ENCODE measurements at regions of chr1 and their contacts with region 1.

Region 1: DNA sequence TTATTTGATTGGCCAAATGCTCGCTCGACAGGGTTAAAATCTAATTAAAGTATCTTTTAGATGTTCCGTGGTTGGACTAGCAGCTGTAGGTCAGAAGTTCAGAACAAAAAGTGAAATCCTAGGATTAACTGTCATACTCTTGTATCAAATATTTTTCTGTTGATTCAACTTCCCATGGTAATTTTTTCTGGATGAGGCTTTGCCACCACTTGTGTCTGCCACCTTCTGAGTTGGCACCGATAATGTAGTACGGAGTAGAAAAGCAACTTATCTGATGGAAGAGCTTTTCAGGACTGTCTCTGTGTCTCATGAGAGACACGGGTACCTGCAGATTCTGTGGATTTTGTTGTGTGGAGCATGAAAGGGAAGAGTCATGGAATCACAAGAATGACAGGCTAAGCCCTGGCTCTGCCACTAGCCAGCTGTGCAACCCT is 44.6 kb upstream of the CNN3 start:
- DNase-seq: no peak
- ATAC-seq: no peak
- H3K4me3 ChIP-seq: no peak overlapping the region
- H3K27ac ChIP-seq: peak overlapping the region in 1 of 2 donors; percentile 61
- H3K4me1 ChIP-seq: peaks cover 1 to 7% of the 10 kb centered on the region in 2 donors
- H3K27me3 ChIP-seq: no peaks in the 10 kb centered on the region

Region 2: GRCh38 chr1:95002540-95003432 is 31.3 kb after region 1 on chr1:
- intact Hi-C with region 1: no loop called
- DNase-seq: no peak
- ATAC-seq: no peak
- H3K4me3 ChIP-seq: no peak overlapping the region
- H3K27ac ChIP-seq: no peak overlapping the region
- H3K4me1 ChIP-seq: peaks cover 0 to 2% of the 10 kb centered on the region in 2 donors
- H3K27me3 ChIP-seq: no peaks in the 10 kb centered on the region

Region 3: DNA sequence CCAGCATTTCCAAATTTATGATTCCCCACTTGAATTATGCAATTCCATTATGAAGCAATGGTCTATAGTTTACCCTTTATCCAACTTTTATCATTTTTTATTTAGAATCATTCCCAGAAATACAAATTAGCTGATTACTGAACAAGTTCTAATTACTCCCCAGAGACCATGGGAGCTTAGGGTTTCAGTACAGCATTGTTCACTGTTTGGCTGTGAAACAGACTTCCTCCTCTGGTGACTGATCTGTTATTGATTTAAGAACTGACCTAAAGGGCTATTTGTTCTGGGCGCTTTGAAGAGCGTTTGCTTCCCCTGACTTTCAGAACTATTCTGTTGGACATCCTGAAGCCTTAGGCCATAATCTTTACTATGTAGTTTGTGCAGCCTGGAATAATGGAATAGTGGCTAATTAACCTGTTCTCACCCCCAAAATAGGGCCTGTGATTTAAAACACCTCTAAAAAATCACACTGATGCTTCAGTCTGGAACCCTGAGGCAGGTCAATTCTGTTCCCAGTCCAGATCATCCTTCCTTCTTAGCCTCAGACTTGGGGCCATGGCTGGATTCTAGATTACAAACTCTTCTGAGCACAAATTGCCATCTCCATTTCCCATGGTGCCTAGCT is 42.6 kb after region 1 on chr1:
- intact Hi-C with region 1: loop called (anchors 5 kb)
- DNase-seq: no peak
- ATAC-seq: peak; percentile 84
- H3K4me3 ChIP-seq: no peak overlapping the region
- H3K27ac ChIP-seq: no peak overlapping the region
- H3K4me1 ChIP-seq: peaks cover 0 to 5% of the 10 kb centered on the region in 2 donors
- H3K27me3 ChIP-seq: no peaks in the 10 kb centered on the region

Region 4: GRCh38 chr1:95179205-95179986 is 207.9 kb after region 1 on chr1:
- intact Hi-C with region 1: no loop called
- DNase-seq: no peak
- ATAC-seq: peak; percentile 19
- H3K4me3 ChIP-seq: no peak overlapping the region
- H3K27ac ChIP-seq: no peak overlapping the region
- H3K4me1 ChIP-seq: peaks cover 0 to 2% of the 10 kb centered on the region in 2 donors
- H3K27me3 ChIP-seq: no peaks in the 10 kb centered on the region

Measured in aorta (tissue), 5 donors.